HEK293 (cell line): ENCODE measurements at regions of chr19 and their contacts with region 1.

Region 1: DNA sequence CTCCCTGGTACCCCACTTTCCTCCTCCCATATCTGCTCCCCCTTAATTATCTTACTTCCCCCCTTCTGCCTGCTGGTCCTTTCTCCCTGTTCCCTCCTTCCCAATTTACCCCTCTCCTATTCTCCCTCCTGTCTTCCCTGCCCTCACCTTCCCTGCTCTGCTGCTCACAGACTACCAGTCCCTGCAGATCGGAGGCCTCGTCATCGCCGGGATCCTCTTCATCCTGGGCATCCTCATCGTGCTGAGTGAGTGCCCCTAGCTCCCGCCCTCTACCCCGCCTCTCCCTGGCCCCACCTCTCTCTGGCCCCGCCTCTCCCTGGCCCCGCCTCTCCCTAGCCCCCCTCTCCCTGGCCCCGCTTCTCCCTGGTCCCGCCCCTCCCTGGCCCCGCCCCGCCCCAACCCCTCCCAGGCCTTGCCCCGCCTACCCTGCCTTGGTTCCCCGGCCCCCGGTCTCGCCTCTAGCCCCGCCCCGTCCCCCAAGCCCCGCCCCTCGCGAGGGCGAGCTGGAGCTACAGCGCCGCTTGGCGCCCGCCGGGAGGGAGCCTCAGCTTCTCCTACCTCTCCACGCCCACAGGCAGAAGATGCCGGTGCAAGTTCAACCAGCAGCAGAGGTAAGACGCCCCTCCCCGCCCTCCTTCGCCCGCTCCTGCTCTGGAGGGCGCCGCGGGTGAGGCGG is 2.0 kb upstream of the FXYD7 start:
- H3K4me3 ChIP-seq: no peak overlapping the region
- H3K27ac ChIP-seq: no peak overlapping the region
- H3K4me1 ChIP-seq: peaks cover 31% of the 10 kb centered on the region
- CTCF ChIP-seq: peak; percentile 90

Region 2: DNA sequence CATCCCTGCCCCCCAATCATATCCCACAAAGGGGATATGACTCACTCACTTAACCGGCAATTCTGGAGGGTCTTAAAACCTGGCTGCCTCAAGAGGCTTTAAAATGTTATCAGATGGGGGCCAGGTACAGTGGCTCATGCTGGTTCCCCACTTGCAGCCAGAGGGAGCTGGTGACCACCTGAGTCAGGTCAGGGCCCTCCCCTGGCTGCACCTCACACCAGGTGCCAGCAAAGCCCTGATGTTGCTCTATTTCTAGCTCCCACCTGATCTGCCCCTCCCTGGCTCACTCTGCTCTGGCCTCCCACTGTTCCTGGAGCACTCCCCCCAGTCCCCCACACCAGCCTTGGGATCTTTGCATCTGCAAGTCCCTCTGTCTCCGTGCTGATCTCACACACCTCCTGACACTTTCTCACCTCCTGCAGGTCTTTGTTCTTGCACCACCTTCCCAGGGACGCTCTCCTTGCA is 85.4 kb before region 1 on chr19:
- CTCF ChIA-PET with region 1: interaction called, 18 read pairs
- POLR2A ChIA-PET with region 1: no interaction called
- H3K4me3 ChIP-seq: no peak overlapping the region
- H3K27ac ChIP-seq: no peak overlapping the region
- H3K4me1 ChIP-seq: peaks cover 7% of the 10 kb centered on the region; the same call in 1 of the 2 replicates
- CTCF ChIP-seq: peak; percentile 89

Region 3: GRCh38 chr19:35114353-35115176 is 26.5 kb before region 1 on chr19:
- CTCF ChIA-PET with region 1: interaction called, 101 read pairs
- POLR2A ChIA-PET with region 1: interaction called, 4 read pairs
- H3K4me3 ChIP-seq: peak overlapping the region; percentile 7
- H3K27ac ChIP-seq: no peak overlapping the region
- H3K4me1 ChIP-seq: peaks cover 2% of the 10 kb centered on the region; the same call in 1 of the 2 replicates
- CTCF ChIP-seq: peak; percentile 98

Region 4: DNA sequence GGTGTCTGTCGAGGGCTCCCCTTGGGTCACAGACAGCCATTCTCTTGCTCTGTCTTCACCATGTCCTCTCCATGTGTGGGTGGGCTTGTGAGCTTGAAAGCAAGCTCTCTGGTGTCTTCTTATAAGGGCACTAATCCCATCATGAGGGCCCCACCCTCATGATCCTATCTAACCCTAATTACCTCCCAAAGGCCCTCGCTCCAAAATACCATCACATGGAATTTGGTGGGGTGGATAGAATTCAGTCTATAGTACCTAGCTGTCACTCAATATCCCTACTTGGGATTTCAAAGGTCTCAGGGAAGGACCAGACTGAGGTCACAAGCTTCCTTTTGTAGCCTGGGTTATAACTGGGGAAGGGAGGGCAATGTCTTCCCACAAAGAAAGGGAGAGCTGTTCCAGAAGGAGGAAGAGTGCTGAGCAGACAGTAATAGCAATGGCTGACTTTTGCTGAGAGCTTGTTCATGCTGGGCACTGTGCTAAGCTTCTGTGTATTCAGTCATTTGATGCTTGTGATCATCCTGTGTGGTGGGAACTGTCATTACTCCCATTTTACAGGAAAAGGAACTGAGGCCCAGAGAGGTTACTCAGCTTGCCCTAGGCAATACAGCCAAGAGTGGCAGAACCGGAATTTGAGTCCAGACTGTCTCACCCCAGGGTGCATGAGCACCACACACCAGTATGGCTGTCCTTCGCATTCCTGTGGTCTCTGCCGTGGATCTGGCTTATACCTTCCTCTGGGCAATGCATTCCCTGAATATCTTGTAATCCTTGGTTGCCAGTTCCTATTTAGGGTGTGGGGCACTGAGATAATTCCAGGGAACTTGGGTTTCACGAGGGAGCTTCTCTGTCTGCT is 21.6 kb after region 1 on chr19:
- CTCF ChIA-PET with region 1: interaction called, 10 read pairs
- POLR2A ChIA-PET with region 1: no interaction called
- H3K4me3 ChIP-seq: no peak overlapping the region
- H3K27ac ChIP-seq: no peak overlapping the region
- H3K4me1 ChIP-seq: no peaks in the 10 kb centered on the region
- CTCF ChIP-seq: no peak

Region 5: GRCh38 chr19:35241417-35241816 is 100.3 kb after region 1 on chr19:
- CTCF ChIA-PET with region 1: interaction called, 16 read pairs
- POLR2A ChIA-PET with region 1: interaction called, 4 read pairs
- H3K4me3 ChIP-seq: no peak overlapping the region
- H3K27ac ChIP-seq: no peak overlapping the region
- H3K4me1 ChIP-seq: no peaks in the 10 kb centered on the region
- CTCF ChIP-seq: no peak

Region 6: GRCh38 chr19:35269421-35270117 is 128.5 kb after region 1 on chr19:
- CTCF ChIA-PET with region 1: interaction called, 28 read pairs
- POLR2A ChIA-PET with region 1: interaction called, 26 read pairs
- H3K4me3 ChIP-seq: peak overlapping the region; percentile 52
- H3K27ac ChIP-seq: peak overlapping the region; percentile 100
- H3K4me1 ChIP-seq: peaks cover 24% of the 10 kb centered on the region
- CTCF ChIP-seq: peak; percentile 96